ENCODE measurements at regions of chr17 and their contacts with region 1.

Region 1: GRCh38 chr17:77088455-77089123 is 52.2 kb upstream of the SEC14L1 start:
- DNase-seq: peak; percentile 90 to 97
- ATAC-seq: peak; percentile 92 to 98 (median 96)
- H3K4me3 ChIP-seq: peak overlapping the region; percentile 39 to 93 (median 72)
- H3K27ac ChIP-seq: peak overlapping the region; percentile 49 to 96 (median 92)
- H3K4me1 ChIP-seq: peaks cover 11 to 52% (median 45%) of the 10 kb centered on the region in 9 donors
- H3K27me3 ChIP-seq: no peaks in the 10 kb centered on the region
- CTCF ChIP-seq: peak; percentile 46 to 95 (median 82)

Region 2: GRCh38 chr17:76612977-76613851 is 475.4 kb before region 1 on chr17:
- intact Hi-C with region 1: no loop called
- DNase-seq: no peak
- ATAC-seq: no peak
- H3K4me3 ChIP-seq: no peak overlapping the region
- H3K27ac ChIP-seq: no peak overlapping the region
- H3K4me1 ChIP-seq: no peaks in the 10 kb centered on the region
- H3K27me3 ChIP-seq: no peaks in the 10 kb centered on the region
- CTCF ChIP-seq: no peak

Region 3: GRCh38 chr17:77120868-77121267 is 32.3 kb after region 1 on chr17:
- intact Hi-C with region 1: no loop called
- DNase-seq: no peak
- ATAC-seq: peak in 3 of 8 donors; percentile 31 to 40 (median 37)
- H3K4me3 ChIP-seq: no peak overlapping the region
- H3K27ac ChIP-seq: peak overlapping the region; percentile 61 to 96 (median 86)
- H3K4me1 ChIP-seq: peaks cover 22 to 90% (median 84%) of the 10 kb centered on the region in 9 donors
- H3K27me3 ChIP-seq: no peaks in the 10 kb centered on the region
- CTCF ChIP-seq: no peak

Region 4: GRCh38 chr17:77140166-77140878 is 51.7 kb after region 1 on chr17:
- intact Hi-C with region 1: loop called in 4 of 10 experiments (anchors 2 to 10 kb)
- DNase-seq: peak; percentile 99 to 100
- ATAC-seq: peak; percentile 96 to 99 (median 98)
- H3K4me3 ChIP-seq: peak overlapping the region; percentile 49 to 89 (median 76)
- H3K27ac ChIP-seq: peak overlapping the region; percentile 89 to 97 (median 96)
- H3K4me1 ChIP-seq: peaks cover 4 to 75% (median 18%) of the 10 kb centered on the region in 9 donors
- H3K27me3 ChIP-seq: no peaks in the 10 kb centered on the region
- CTCF ChIP-seq: peak in 2 of 9 donors; percentile 13

Region 5: GRCh38 chr17:77247048-77247541 is 158.5 kb after region 1 on chr17:
- intact Hi-C with region 1: loop called (anchors 1 to 5 kb)
- DNase-seq: peak; percentile 81 to 90
- ATAC-seq: peak; percentile 86 to 94 (median 90)
- H3K4me3 ChIP-seq: peak overlapping the region; percentile 34 to 75 (median 64)
- H3K27ac ChIP-seq: peak overlapping the region in 9 of 10 donors; percentile 1 to 83 (median 63)
- H3K4me1 ChIP-seq: peaks cover 8 to 28% (median 12%) of the 10 kb centered on the region in 9 donors
- H3K27me3 ChIP-seq: peaks cover 0 to 22% (median 0%) of the 10 kb centered on the region in 7 donors
- CTCF ChIP-seq: peak; percentile 96 to 100 (median 99)

Region 6: GRCh38 chr17:77494664-77495435 is 406.3 kb after region 1 on chr17:
- intact Hi-C with region 1: loop called in 1 of 10 experiments (anchors 10 kb)
- DNase-seq: peak; percentile 74 to 82
- ATAC-seq: peak; percentile 55 to 82 (median 72)
- H3K4me3 ChIP-seq: no peak overlapping the region
- H3K27ac ChIP-seq: peak overlapping the region in 1 of 10 donors; percentile 40
- H3K4me1 ChIP-seq: peaks cover 9 to 28% (median 18%) of the 10 kb centered on the region in 9 donors
- H3K27me3 ChIP-seq: no peaks in the 10 kb centered on the region
- CTCF ChIP-seq: peak; percentile 95 to 100 (median 98)

Region 7: GRCh38 chr17:77677211-77677610 is 588.6 kb after region 1 on chr17:
- intact Hi-C with region 1: no loop called
- DNase-seq: peak; percentile 36 to 40
- ATAC-seq: peak in 5 of 8 donors; percentile 31 to 65 (median 62)
- H3K4me3 ChIP-seq: peak overlapping the region in 2 of 10 donors; percentile 14 to 23
- H3K27ac ChIP-seq: peak overlapping the region in 7 of 10 donors; percentile 20 to 75 (median 50)
- H3K4me1 ChIP-seq: peaks cover 11 to 47% (median 27%) of the 10 kb centered on the region in 9 donors
- H3K27me3 ChIP-seq: no peaks in the 10 kb centered on the region
- CTCF ChIP-seq: no peak

Region 8: GRCh38 chr17:77935121-77935571 is 846.6 kb after region 1 on chr17:
- intact Hi-C with region 1: no loop called
- DNase-seq: no peak
- ATAC-seq: no peak
- H3K4me3 ChIP-seq: no peak overlapping the region
- H3K27ac ChIP-seq: no peak overlapping the region
- H3K4me1 ChIP-seq: no peaks in the 10 kb centered on the region
- H3K27me3 ChIP-seq: peaks cover 0 to 22% (median 3%) of the 10 kb centered on the region in 7 donors
- CTCF ChIP-seq: no peak